ENCODE measurements at regions of chr13 and their contacts with region 1.

Region 1: DNA sequence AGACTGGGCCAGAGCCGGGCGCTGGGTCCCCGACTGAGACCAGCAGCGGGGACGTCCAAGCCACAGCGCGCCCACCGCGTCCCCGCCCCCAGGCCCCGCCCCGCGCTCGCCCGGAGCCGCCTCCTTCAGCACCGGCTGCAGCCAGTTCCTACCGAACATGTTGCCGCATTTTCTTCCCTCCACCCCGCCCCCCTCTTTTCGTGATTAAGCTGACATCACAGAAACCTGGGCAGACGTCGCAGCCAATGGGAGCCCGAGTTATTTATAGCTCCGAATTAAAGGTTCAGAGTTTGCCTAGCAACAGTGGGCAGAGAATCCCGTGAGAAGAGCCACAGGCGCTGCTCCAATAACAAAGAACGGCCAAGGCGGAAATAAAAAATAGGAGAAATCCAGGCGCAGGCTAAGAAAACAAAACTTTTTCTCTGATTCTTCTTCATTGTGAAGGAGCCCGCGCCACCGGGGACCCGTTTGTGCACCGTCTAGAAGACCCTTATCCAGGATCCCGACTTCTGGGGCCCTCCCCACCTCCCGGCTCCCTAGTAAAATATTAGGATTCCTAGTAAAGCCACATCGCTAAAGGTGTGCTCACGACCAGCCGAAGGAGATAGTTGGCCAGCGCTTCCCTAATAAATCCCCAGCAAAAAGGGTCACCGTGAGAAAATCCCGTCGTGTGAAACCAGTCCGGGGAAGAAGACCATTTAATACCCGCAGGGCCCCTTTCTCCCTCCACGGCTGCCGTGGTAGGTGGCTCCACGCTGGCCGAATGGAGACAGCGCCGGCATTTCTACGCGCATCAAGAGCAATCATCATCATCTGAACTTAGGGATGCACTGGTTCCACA is 61.7 kb downstream of the SERP2 start:
- DNase-seq: peak; percentile 97

Region 2: GRCh38 chr13:43915451-43915850 is 519.9 kb before region 1 on chr13:
- intact Hi-C with region 1: loop called in 1 of 2 experiments (anchors 10 kb)
- DNase-seq: no peak

Region 3: GRCh38 chr13:44050450-44051063 is 384.8 kb before region 1 on chr13:
- intact Hi-C with region 1: loop called (anchors 5 kb)
- DNase-seq: no peak

Measured in posterior vena cava (tissue), 2 donors.